GM13977 (cell line): ENCODE measurements at regions of chr5 and their contacts with region 1.

Region 1: GRCh38 chr5:96344678-96345577 is 88.1 kb downstream of the PCSK1 start:
- DNase-seq: peak; percentile 29
- CTCF ChIP-seq: peak; percentile 65

Region 2: GRCh38 chr5:96434201-96434645 is 89.3 kb after region 1 on chr5:
- in situ Hi-C with region 1: loop called (anchors 10 kb)
- DNase-seq: peak; percentile 28
- CTCF ChIP-seq: no peak

Region 3: DNA sequence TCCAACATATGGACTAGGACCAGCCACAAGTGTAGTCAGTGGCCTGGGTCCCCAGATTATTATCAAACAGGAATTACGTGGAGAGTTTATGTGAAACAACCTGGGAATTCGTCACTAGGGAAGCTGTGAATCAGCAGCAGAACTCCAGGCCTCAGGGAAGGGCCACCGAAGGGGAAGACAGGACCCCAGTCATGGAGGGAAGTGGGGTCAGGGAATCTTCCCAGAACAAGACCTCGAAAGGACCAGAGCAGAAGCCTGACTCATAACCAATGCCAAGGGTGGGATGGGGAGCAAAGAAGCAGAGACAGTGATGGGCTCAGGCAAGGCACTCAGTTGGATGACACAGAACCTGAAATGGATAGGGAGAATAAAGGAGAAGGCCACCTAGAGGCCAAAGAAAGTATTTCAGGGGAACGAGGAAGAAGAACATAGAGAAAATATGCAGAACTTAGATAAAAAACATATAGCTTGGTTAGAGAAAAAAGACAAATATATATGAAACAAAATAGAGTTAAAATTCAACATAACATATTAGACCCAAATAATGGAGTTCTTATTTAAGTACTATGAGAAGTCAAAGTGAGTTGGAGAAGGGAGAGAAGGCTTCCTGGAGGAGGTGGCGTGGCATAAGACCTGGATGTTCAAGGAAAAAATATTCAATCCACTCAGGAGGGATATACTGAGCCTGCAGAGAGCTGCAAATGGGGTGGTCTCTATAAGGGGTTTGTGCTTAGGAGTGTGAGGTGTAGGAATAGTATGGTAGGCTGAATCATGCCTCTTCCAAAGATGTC is 250.6 kb after region 1 on chr5:
- in situ Hi-C with region 1: loop called (anchors 10 kb)
- DNase-seq: no peak
- CTCF ChIP-seq: peak; percentile 47